HepG2 (cell line): ENCODE measurements at regions of chr3 and their contacts with region 1.

Region 1: GRCh38 chr3:32703491-32703972 is 18.5 kb downstream of the CNOT10 start:
- DNase-seq: peak; percentile 80
- ATAC-seq: peak; percentile 99
- H3K4me3 ChIP-seq: peak overlapping the region in 1 of 3 experiments; percentile 6; a peak in 2 of 6 replicates
- H3K27ac ChIP-seq: peak overlapping the region; percentile 84
- H3K4me1 ChIP-seq: peaks cover 13% of the 10 kb centered on the region
- H3K27me3 ChIP-seq: no peaks in the 10 kb centered on the region
- CTCF ChIP-seq: no peak
- EP300 ChIP-seq: peak in 1 of 2 experiments; percentile 26; a peak in 1 of 4 replicates
- POLR2A ChIP-seq: no peak; a peak in 1 of 4 replicates
- RAD21 ChIP-seq: no peak

Region 2: DNA sequence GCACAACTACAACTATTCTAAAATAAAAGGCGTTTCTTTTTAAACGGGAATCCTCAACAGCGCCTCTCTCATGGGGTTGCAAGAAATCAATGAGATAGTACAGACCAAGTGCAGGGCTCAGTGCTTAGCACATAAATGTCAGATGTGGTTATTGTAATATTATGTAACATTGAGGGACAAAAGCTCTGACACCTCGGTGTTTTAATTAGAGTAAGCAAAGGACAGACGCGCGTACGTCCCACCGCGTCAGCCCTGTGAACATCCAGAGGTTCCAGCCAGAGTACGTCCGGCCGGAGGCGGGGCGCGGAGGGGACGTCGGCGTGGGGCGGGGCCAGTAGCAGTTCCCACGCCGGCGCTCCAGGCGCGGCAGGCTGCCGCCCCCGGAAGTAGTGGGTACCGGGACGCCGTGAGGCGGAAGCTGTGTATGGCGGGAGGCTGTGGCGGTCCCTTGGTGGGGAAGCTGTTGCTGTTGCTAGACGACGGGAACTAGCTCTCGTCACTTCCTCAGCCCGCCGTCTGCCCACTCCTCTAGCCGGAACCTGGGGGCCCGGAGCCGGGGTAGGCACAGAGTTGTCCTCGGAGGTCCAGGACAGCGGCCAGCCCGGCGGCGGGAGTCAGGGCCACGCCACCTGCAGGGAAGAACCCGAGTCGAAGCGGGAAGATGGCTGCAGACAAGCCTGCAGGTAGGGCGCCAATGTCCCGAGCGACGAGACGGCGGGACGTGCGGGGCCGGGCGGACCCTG is 18.6 kb before region 1 on chr3 and contains the start of gene CNOT10:
- CTCF ChIA-PET with region 1: no interaction called
- POLR2A ChIA-PET with region 1: interaction called, 4 read pairs
- in situ Hi-C with region 1: no loop called
- intact Hi-C with region 1: loop called (anchors 1 kb)
- DNase-seq: peak; percentile 93
- ATAC-seq: peak; percentile 98
- H3K4me3 ChIP-seq: peak within 1 kb of the TSS; percentile 72 to 90 (median 80)
- H3K27ac ChIP-seq: peak within 1 kb of the TSS; percentile 78
- H3K4me1 ChIP-seq: peaks cover 28% of the 10 kb centered on the region
- H3K27me3 ChIP-seq: no peaks in the 10 kb centered on the region
- CTCF ChIP-seq: peak; percentile 61
- EP300 ChIP-seq: no peak
- POLR2A ChIP-seq: peak in 1 of 2 experiments; percentile 80; a peak in 3 of 4 replicates
- RAD21 ChIP-seq: peak; percentile 39; the same call in 1 of the 2 replicates
- total RNA-seq, gene CNOT10: 34.1 and 39.0 TPM in 2 replicates